ENCODE measurements at regions of chr1 and their contacts with region 1.

Region 1: DNA sequence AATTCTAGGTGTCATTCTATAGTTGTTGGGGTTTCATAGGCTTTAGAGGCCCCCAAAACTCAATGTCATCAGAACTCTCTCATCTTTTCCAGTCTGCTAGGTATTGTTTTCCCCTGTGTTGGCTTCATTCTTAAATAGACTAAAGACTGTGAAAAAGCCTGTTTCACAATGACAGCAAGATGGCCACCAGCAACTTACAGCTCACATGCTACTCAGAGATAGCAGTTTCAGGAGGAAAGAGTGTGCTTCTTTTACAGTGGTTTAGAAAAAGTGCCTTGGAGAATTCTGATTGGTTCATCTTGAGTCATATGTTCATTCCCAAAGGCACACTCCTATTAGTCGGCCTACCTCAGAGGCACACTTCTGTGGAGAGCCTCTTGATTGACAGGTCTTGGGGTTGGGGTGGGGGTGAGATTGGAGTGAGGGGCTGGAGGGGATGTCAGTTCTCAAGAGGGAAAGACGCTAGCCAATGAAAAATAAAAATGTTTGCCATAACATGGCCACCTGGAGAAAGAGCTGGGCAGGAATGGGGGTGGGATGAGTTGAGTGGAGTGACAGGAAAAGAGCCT is 8.5 kb downstream of the IL23R start:
- DNase-seq: no peak
- H3K4me3 Mint-ChIP-seq: peak overlapping the region; percentile 76
- H3K27ac Mint-ChIP-seq: peak overlapping the region; percentile 98
- H3K4me1 Mint-ChIP-seq: peaks cover 68% of the 10 kb centered on the region
- H3K27me3 Mint-ChIP-seq: no peaks in the 10 kb centered on the region

Region 2: DNA sequence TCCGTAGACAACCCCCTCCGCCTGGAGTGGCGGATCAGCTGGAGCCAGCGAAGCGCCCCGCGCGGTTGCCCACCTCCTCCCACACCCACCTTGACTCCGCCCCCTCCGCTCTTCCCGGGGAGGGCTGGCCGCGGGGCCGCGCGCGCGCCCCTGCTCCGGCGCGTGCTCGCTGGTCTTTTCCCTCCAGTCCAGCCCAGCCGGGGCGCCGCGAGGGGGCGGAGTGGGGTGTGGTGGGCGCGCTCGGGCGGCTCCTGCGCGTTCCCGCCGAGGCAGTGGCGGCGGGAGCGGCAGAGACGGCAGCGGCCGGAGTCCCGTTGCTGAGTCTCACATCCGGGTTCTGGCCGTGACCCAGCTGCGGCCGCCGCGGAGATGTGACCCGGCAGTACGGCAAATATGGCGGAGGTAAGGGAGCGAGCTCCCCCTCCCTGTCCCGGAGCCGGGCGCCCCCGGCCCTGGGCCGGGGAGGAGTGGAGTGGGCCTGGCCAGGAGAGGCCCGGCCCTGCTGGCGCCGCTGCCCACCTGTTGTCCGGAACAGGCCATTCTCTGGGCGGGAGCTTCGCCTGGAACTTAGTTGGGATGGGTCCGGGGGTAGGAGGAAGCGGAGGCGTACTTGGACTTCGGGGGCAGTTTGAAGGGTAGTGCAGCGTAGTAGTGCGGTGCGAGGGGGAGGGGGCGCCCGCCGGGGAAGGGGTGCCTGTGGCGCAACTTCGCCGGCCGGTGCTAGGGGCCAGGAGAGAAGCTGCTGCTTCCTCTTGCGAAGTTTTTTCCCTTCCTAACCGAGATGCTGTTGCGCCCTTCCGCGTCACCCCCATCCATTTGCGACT is 244.6 kb before region 1 on chr1:
- intact Hi-C with region 1: loop called (anchors 5 kb)
- DNase-seq: peak; percentile 93
- H3K4me3 Mint-ChIP-seq: peak overlapping the region; percentile 89
- H3K27ac Mint-ChIP-seq: peak overlapping the region; percentile 93
- H3K4me1 Mint-ChIP-seq: peaks cover 72% of the 10 kb centered on the region
- H3K27me3 Mint-ChIP-seq: no peaks in the 10 kb centered on the region

Region 3: GRCh38 chr1:67149179-67149770 is 25.5 kb before region 1 on chr1:
- intact Hi-C with region 1: no loop called
- DNase-seq: peak; percentile 42
- H3K4me3 Mint-ChIP-seq: no peak overlapping the region
- H3K27ac Mint-ChIP-seq: peak overlapping the region; percentile 40
- H3K4me1 Mint-ChIP-seq: peaks cover 56% of the 10 kb centered on the region
- H3K27me3 Mint-ChIP-seq: no peaks in the 10 kb centered on the region

Region 4: DNA sequence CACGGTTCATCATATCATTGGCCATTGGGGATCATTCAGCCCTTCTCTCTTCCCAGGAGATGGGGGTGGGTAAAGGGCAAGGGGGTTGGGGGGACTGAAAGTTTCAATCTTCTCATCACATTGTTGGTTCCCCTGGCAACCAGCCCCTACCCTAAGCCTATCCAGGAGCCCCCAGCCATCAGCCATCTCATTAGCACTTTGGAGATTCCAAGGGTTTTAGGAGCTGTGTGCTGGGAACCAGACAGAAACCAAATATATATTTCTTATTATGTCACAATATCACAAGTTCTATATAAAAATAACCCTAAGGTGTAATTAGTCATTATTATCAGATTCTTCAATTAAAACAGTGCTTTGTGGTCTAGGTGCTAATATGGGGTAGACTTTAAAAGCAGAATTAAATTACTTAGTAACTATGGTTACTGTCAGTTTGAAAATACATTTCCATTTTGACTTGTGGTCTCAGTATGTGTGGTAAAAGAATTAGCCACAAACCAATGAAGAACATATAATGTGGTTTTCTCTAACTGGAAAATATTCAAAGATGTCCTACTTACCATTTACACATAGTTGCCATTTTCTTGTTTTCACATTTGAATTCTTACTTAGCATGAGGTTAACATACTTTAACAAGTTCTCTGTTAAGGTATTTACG is 19.5 kb after region 1 on chr1:
- intact Hi-C with region 1: loop called (anchors 1 kb)
- DNase-seq: no peak
- H3K4me3 Mint-ChIP-seq: no peak overlapping the region
- H3K27ac Mint-ChIP-seq: no peak overlapping the region
- H3K4me1 Mint-ChIP-seq: peaks cover 38% of the 10 kb centered on the region
- H3K27me3 Mint-ChIP-seq: no peaks in the 10 kb centered on the region

Region 5: DNA sequence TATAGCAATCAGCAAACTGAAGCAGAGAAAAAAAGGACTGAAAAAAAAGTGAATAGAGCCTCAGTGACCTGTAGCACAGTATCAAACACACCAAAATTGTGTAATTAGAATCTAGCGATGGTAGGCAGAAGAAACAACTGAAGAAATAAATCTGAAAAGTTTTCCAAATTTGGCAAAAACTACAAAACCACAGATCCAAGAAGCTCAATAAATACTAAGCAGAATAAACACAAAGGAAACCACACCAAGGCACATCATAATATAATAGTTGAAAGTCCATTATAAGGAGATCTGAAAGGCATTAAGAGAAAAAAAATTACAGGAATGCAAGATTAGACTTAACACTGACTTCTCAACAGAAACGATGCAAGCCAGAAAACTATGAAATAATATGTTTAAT is 125.8 kb after region 1 on chr1:
- intact Hi-C with region 1: loop called (anchors 1 kb)
- DNase-seq: no peak
- H3K4me3 Mint-ChIP-seq: peak overlapping the region; percentile 35
- H3K27ac Mint-ChIP-seq: peak overlapping the region; percentile 63
- H3K4me1 Mint-ChIP-seq: peaks cover 88% of the 10 kb centered on the region
- H3K27me3 Mint-ChIP-seq: no peaks in the 10 kb centered on the region

Region 6: GRCh38 chr1:67339623-67340343 is 165.0 kb after region 1 on chr1:
- intact Hi-C with region 1: loop called (anchors 1 kb)
- DNase-seq: peak; percentile 47
- H3K4me3 Mint-ChIP-seq: peak overlapping the region; percentile 66
- H3K27ac Mint-ChIP-seq: peak overlapping the region; percentile 90
- H3K4me1 Mint-ChIP-seq: peaks cover 80% of the 10 kb centered on the region
- H3K27me3 Mint-ChIP-seq: no peaks in the 10 kb centered on the region